Activated CD8-positive, alpha-beta memory T cell treated with anti-CD3 and anti-CD28 coated beads, Interleukin-2, amount 10 ng/mL, durations not matched to agents 7 days and 5 days (primary cell): ENCODE measurements at regions of chr1 and their contacts with region 1.

Region 1: GRCh38 chr1:117758444-117759316 is 152.8 kb downstream of the TENT5C start:
- DNase-seq: peak; percentile 81
- ATAC-seq: peak; percentile 92
- H3K4me3 Mint-ChIP-seq: peak overlapping the region; percentile 65
- H3K27ac Mint-ChIP-seq: no peak overlapping the region
- H3K4me1 Mint-ChIP-seq: peaks cover 21% of the 10 kb centered on the region
- H3K27me3 Mint-ChIP-seq: peaks cover 21% of the 10 kb centered on the region

Region 2: DNA sequence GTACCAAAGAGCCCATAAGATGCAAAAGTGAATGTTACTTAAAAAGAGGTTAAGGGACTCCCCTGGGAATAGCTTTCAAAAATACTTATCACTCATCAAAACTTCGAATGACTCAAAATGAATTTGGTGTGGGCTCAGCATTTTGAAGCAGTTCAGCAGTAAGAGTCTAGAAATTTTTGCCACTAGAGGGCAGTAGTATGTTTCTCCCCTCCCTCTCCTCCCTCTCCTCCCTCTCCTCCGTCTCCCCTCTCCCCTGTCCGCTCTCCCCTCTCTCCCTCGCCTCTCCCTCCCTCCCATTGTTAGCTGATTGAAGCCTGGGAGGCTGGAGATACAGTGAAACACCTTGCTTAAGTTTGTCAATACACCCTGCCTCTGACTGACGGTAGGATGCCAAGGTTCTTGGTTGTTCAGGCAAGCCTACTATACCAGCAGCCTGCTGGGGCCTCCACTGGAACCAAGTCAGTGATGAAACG is 223.6 kb before region 1 on chr1:
- CTCF ChIA-PET with region 1: interaction called, 261 read pairs
- DNase-seq: peak; percentile 55
- ATAC-seq: peak; percentile 92
- H3K4me3 Mint-ChIP-seq: no peak overlapping the region
- H3K27ac Mint-ChIP-seq: no peak overlapping the region
- H3K4me1 Mint-ChIP-seq: peaks cover 5% of the 10 kb centered on the region
- H3K27me3 Mint-ChIP-seq: no peaks in the 10 kb centered on the region

Region 3: DNA sequence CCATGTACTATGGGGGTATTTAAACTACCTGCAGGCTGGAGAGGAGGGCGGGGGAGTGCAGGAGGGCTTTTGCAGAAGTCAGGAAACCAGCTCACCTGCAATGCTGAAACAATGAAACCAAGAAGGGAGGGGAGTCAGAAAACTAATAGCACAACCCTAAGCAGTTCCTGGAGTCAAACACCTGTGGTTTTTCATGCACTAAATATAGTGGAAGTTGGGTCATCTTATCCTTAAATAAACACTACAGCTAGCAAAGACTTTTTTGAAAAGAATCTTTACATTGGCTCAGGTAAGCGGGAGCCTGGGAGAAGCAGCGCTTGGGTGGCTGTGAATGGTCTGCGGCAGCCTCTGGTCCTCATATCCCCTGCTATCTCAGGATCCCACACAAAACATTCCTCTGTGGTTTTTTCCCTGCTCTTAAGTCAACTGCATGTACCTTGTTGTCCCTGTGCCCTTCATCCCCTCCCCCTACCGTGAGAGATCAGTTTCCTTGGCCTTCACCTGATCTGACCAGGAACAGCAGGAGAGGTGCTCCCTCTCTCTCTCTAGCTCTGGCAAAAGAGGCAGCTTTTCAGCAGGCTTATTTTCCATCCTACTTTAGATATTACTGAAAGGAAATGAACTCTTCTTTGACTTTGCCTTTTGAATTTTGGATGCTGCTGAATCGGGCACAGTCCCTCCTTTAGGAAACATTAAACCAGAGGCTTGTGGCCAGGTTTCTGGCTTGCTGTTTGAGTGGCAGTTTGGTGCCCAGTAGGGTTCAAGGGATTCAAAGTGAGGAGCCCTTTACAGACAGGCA is 126.2 kb before region 1 on chr1:
- CTCF ChIA-PET with region 1: interaction called, 11 read pairs
- DNase-seq: no peak
- ATAC-seq: no peak
- H3K4me3 Mint-ChIP-seq: no peak overlapping the region
- H3K27ac Mint-ChIP-seq: peak overlapping the region; percentile 41
- H3K4me1 Mint-ChIP-seq: peaks cover 69% of the 10 kb centered on the region
- H3K27me3 Mint-ChIP-seq: no peaks in the 10 kb centered on the region

Region 4: DNA sequence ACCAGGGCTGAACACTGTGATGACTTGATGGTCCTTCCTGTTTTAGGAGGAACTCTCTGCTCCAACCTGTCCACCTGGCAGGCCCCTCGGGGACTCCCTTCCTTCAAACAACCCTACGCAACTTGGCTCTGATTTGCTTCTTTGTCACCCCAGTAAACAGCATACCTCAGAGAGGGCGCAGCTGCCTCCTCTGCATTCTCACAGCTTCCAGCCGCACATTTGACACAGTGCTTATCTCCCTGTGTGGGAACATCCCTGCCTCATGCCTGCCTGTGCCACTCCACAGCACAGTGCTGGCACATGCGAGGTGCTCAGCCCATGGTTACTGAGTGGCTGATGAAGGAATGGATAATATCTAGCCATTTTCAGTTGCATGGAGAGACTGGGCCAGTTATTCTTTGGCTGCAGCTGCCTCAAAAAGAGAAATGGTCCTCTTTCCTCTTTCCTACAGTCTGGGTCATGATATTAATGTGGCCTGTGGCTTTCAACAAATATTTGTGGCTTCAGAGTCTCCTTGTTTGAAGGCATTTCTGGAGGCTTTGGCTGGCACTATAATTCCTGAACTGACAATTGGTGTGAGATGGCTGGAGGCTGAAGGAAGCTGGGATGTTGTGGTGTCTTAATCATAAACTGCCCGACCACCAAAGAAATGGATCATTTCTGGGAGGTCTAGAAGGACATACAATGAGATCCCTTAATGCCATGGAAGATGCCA is 75.0 kb before region 1 on chr1:
- CTCF ChIA-PET with region 1: interaction called, 15 read pairs
- DNase-seq: peak; percentile 33
- ATAC-seq: no peak
- H3K4me3 Mint-ChIP-seq: no peak overlapping the region
- H3K27ac Mint-ChIP-seq: no peak overlapping the region
- H3K4me1 Mint-ChIP-seq: peaks cover 5% of the 10 kb centered on the region
- H3K27me3 Mint-ChIP-seq: peaks cover 1% of the 10 kb centered on the region

Region 5: DNA sequence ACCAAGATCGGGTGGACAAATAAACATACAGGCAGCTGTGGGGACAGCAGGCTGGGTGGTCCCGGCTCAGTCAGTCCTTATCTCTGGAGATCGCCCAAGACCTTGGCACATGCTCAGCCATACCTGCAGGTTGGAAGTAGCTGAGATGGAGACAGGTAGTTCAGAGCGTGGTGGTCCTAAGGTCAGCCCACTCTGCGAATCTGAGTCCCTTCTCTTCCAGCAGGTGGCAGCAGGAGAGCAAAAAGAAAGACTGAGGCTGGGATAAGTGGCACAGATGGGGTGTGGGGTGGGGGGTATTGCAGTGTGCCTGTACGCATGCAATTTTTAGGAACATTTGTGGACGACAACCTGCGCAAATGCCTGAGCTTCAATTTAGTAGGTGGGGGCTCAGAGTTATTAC is 48.0 kb before region 1 on chr1:
- CTCF ChIA-PET with region 1: interaction called, 17 read pairs
- DNase-seq: no peak
- ATAC-seq: no peak
- H3K4me3 Mint-ChIP-seq: no peak overlapping the region
- H3K27ac Mint-ChIP-seq: no peak overlapping the region
- H3K4me1 Mint-ChIP-seq: peaks cover 2% of the 10 kb centered on the region
- H3K27me3 Mint-ChIP-seq: peaks cover 6% of the 10 kb centered on the region

Region 6: GRCh38 chr1:117740496-117740895 is 18.2 kb before region 1 on chr1:
- CTCF ChIA-PET with region 1: interaction called, 59 read pairs
- DNase-seq: no peak
- ATAC-seq: no peak
- H3K4me3 Mint-ChIP-seq: no peak overlapping the region
- H3K27ac Mint-ChIP-seq: no peak overlapping the region
- H3K4me1 Mint-ChIP-seq: peaks cover 3% of the 10 kb centered on the region
- H3K27me3 Mint-ChIP-seq: peaks cover 20% of the 10 kb centered on the region

Region 7: GRCh38 chr1:117775913-117776312 is 17.2 kb after region 1 on chr1:
- CTCF ChIA-PET with region 1: no interaction called
- DNase-seq: no peak
- ATAC-seq: no peak
- H3K4me3 Mint-ChIP-seq: no peak overlapping the region
- H3K27ac Mint-ChIP-seq: no peak overlapping the region
- H3K4me1 Mint-ChIP-seq: no peaks in the 10 kb centered on the region
- H3K27me3 Mint-ChIP-seq: peaks cover 4% of the 10 kb centered on the region